B cell (primary cell): ENCODE measurements at regions of chr17 and their contacts with region 1.

Region 1: DNA sequence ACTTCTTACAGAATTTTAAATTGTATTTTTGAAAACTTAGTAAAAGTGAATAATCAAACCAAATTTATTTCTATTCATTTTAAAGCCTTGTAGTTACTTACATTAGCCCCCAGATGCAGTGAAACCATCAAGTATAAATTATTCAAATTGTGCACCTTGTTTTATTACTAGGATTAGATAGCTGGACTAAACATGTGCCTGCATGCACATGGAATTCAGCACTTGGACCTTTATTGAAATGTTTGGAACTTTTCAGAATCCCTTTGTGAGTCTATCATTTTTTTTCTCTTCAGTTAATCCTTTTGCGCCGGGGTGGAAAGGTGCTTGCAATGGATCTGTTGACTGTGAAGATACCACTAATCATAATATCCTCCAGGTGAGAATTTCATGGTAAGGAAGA is 4.7 kb downstream of the ZPBP2 start:
- DNase-seq: peak; percentile 56
- ATAC-seq: peak; percentile 31
- H3K4me3 ChIP-seq: peak overlapping the region in 2 of 5 experiments; percentile 2 to 6
- H3K4me3 Mint-ChIP-seq: peak overlapping the region; percentile 67
- H3K27ac ChIP-seq: peak overlapping the region in 1 of 2 donors; percentile 36
- H3K27ac Mint-ChIP-seq: peak overlapping the region; percentile 50
- H3K4me1 ChIP-seq: peaks cover 31 to 45% of the 10 kb centered on the region in 2 donors
- H3K4me1 Mint-ChIP-seq: peaks cover 44% of the 10 kb centered on the region
- H3K27me3 ChIP-seq: no peaks in the 10 kb centered on the region
- H3K27me3 Mint-ChIP-seq: no peaks in the 10 kb centered on the region
- CTCF ChIP-seq: peak; percentile 82

Region 2: DNA sequence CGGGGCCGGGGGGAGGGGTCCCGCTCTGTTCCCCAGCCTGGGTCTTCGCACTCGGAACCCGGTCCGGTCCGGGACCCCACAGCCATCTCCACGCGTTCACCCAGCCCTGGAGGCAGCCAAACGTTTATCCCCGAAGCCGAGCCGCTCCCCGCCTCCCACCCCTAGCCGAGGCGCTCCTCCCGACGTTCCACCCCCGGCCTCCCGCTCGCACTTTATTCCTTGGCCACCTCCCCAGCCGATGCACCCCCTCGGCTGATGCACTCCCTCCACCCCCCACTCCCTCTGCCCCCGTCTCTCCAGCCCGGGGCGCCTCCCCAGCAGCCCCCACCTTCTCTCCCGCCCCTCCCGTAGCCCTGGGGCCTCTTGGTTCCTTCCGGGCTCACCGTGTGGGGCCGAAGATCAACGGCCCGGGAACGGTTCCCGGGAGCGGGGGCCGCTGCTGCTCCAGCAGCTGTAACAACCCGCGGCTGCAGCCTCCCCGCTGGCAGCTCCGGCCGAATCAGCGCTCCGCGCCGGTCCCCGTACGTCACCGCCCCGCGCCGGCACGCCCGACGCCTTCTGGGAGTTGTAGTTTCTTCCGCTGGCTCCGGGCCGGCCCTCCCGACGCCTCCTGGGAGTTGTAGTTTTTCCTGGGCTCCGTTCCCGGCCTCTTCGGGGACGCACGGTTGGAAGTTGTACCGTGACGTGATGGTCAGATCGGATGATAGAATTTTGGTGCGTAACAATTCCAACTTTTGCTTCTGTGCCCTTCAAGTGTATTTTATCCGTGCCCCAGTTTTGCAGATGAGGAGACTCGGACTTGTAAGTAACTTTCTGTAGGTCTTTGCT is 54.6 kb after region 1 on chr17 and contains the starts of genes LRRC3C and ORMDL3:
- CTCF ChIA-PET with region 1: interaction called, 7 read pairs
- POLR2A ChIA-PET with region 1: no interaction called
- intact Hi-C with region 1: loop called (anchors 2 kb)
- DNase-seq: peak; percentile 93
- ATAC-seq: peak; percentile 96
- H3K4me3 ChIP-seq: peak within 1 kb of the TSS; percentile 66 to 93 (median 79)
- H3K4me3 Mint-ChIP-seq: peak within 1 kb of the TSS; percentile 92
- H3K27ac ChIP-seq: peak within 1 kb of the TSS; percentile 46 to 73
- H3K27ac Mint-ChIP-seq: peak within 1 kb of the TSS; percentile 87
- H3K4me1 ChIP-seq: peaks cover 33 to 34% of the 10 kb centered on the region in 2 donors
- H3K4me1 Mint-ChIP-seq: peaks cover 36% of the 10 kb centered on the region
- H3K27me3 ChIP-seq: no peaks in the 10 kb centered on the region
- H3K27me3 Mint-ChIP-seq: no peaks in the 10 kb centered on the region
- CTCF ChIP-seq: no peak
- total RNA-seq, gene LRRC3C: not detected in 2 replicates
- total RNA-seq, gene ORMDL3: 43.4 and 51.8 TPM in 2 replicates

Region 3: DNA sequence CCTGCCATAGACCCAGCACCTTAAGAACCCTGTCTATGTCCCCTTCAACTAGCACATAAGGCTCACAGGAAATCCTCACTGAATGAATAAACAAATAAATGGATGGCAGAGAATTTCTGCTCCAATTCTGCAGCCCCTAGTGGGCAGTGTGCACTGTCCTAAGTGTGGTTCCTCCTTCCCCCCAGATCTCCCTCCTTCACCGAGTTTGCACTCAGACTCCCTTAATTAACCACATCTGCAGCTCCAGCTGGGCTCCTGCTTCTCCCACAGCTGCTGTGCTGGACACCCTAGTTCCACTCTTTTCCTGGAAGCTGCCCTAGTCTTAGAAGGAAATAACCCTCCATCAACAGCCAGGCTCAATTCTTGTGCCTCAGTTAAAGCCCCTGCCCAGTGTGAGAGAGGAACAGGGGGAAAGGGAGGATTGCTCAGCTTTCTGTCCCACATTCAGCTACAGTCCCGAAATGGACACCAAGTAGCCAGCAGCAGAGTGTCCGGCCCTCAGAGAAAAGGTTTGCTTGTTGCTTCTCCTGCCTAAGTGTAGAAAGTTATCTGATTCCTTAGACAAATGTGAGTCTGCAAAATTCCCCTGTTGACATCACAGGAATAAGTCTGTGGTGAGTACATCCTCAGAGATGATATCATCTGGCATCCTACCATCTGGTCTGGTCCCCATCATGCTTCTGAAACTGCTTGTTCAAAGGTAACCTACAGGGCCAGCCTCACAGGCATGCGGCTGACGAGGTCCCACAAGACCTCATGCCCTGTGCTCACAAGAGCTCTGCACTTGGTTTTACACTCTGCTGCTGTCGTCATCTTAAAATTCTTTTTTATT is 67.1 kb after region 1 on chr17:
- CTCF ChIA-PET with region 1: interaction called, 14 read pairs
- POLR2A ChIA-PET with region 1: no interaction called
- intact Hi-C with region 1: no loop called
- DNase-seq: peak; percentile 56
- ATAC-seq: peak; percentile 70
- H3K4me3 ChIP-seq: no peak overlapping the region
- H3K4me3 Mint-ChIP-seq: no peak overlapping the region
- H3K27ac ChIP-seq: peak overlapping the region in 1 of 2 donors; percentile 14
- H3K27ac Mint-ChIP-seq: peak overlapping the region; percentile 16
- H3K4me1 ChIP-seq: peaks cover 17 to 22% of the 10 kb centered on the region in 2 donors
- H3K4me1 Mint-ChIP-seq: peaks cover 13% of the 10 kb centered on the region
- H3K27me3 ChIP-seq: no peaks in the 10 kb centered on the region
- H3K27me3 Mint-ChIP-seq: no peaks in the 10 kb centered on the region
- CTCF ChIP-seq: peak; percentile 52

Region 4: DNA sequence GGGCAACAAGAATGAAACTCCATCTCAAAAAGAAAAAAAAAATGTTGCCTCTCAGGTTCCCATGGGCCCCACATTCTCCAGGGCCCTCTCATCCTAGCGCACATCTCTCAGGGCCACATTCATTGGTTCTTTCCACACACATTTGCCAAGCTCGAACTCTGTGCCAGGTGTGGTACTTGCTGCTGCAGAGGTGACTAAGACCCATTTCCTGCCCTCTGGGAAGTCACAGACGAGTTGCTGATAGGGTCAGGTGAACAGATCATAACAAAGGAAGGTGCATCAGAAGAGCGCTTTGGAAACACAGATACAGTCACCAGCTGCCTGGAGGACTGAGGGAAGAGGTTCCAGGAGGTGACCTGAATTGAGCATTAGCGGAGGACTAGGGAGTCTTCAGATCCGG is 91.1 kb after region 1 on chr17:
- CTCF ChIA-PET with region 1: interaction called, 31 read pairs
- POLR2A ChIA-PET with region 1: no interaction called
- intact Hi-C with region 1: loop called (anchors 1 kb)
- DNase-seq: no peak
- ATAC-seq: no peak
- H3K4me3 ChIP-seq: no peak overlapping the region
- H3K4me3 Mint-ChIP-seq: no peak overlapping the region
- H3K27ac ChIP-seq: no peak overlapping the region
- H3K27ac Mint-ChIP-seq: no peak overlapping the region
- H3K4me1 ChIP-seq: peaks cover 12 to 13% of the 10 kb centered on the region in 2 donors
- H3K4me1 Mint-ChIP-seq: peaks cover 9% of the 10 kb centered on the region
- H3K27me3 ChIP-seq: no peaks in the 10 kb centered on the region
- H3K27me3 Mint-ChIP-seq: peaks cover 15% of the 10 kb centered on the region
- CTCF ChIP-seq: no peak